ENCODE measurements at regions of chr3 and their contacts with region 1.

Region 1: GRCh38 chr3:67113802-67114407 is 115.8 kb downstream of the KBTBD8 start:
- DNase-seq: peak; percentile 37 to 95 (median 82)
- H3K4me3 ChIP-seq: no peak overlapping the region
- H3K27ac ChIP-seq: no peak overlapping the region
- H3K27me3 ChIP-seq: no peaks in the 10 kb centered on the region
- CTCF ChIP-seq: peak; percentile 75 to 94 (median 88)

Region 2: GRCh38 chr3:66722675-66723074 is 391.2 kb before region 1 on chr3:
- intact Hi-C with region 1: no loop called
- DNase-seq: no peak
- H3K4me3 ChIP-seq: no peak overlapping the region
- H3K27ac ChIP-seq: no peak overlapping the region
- H3K27me3 ChIP-seq: no peaks in the 10 kb centered on the region
- CTCF ChIP-seq: no peak

Region 3: GRCh38 chr3:66971891-66972551 is 141.9 kb before region 1 on chr3:
- intact Hi-C with region 1: loop called (anchors 10 kb)
- DNase-seq: peak; percentile 27 to 76 (median 64)
- H3K4me3 ChIP-seq: peak overlapping the region; percentile 7 to 66 (median 44)
- H3K27ac ChIP-seq: peak overlapping the region in 13 of 59 donors; percentile 3 to 63 (median 24)
- H3K27me3 ChIP-seq: no peaks in the 10 kb centered on the region
- CTCF ChIP-seq: peak; percentile 36 to 91 (median 79)

Region 4: DNA sequence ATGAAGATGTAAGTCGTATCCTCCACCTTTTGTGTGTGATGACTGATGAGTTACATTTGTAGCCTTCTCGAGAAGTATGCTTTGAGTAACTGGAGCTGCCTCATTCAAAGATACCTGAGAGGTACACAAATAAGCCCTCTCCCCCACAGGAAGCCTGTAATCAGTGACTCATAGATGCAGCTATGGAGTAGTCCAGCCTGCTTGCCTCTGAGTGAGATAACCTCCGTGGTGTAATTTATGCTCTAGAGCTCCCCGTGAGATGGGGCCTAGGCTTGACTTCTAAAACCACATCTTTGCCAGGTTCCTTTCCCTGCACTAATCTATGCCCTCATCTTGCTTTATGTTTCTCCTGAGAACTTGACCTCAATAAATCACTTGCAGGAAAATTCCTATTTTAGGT is 248.8 kb after region 1 on chr3:
- intact Hi-C with region 1: loop called in 1 of 2 experiments (anchors 10 kb)
- DNase-seq: no peak
- H3K4me3 ChIP-seq: no peak overlapping the region
- H3K27ac ChIP-seq: no peak overlapping the region
- H3K27me3 ChIP-seq: no peaks in the 10 kb centered on the region
- CTCF ChIP-seq: no peak